ENCODE measurements at regions of chr2 and their contacts with region 1.

Region 1: GRCh38 chr2:10408649-10409579 is 39.2 kb downstream of the ODC1 start:
- DNase-seq: peak; percentile 70 to 80 (median 80)
- H3K4me3 ChIP-seq: peak overlapping the region in 1 of 3 experiments; percentile 48
- H3K4me3 Mint-ChIP-seq: peak overlapping the region; percentile 58 to 85
- H3K27ac ChIP-seq: peak overlapping the region; percentile 87 to 91
- H3K27ac Mint-ChIP-seq: peak overlapping the region; percentile 92 to 99 (median 97)
- H3K4me1 ChIP-seq: peaks cover 64 to 70% of the 10 kb centered on the region in 2 donors
- H3K4me1 Mint-ChIP-seq: peaks cover 75% of the 10 kb centered on the region
- H3K27me3 ChIP-seq: no peaks in the 10 kb centered on the region
- H3K27me3 Mint-ChIP-seq: peaks cover 0 to 7% (median 1%) of the 10 kb centered on the region in 3 donors
- CTCF ChIP-seq: peak; percentile 99

Region 2: DNA sequence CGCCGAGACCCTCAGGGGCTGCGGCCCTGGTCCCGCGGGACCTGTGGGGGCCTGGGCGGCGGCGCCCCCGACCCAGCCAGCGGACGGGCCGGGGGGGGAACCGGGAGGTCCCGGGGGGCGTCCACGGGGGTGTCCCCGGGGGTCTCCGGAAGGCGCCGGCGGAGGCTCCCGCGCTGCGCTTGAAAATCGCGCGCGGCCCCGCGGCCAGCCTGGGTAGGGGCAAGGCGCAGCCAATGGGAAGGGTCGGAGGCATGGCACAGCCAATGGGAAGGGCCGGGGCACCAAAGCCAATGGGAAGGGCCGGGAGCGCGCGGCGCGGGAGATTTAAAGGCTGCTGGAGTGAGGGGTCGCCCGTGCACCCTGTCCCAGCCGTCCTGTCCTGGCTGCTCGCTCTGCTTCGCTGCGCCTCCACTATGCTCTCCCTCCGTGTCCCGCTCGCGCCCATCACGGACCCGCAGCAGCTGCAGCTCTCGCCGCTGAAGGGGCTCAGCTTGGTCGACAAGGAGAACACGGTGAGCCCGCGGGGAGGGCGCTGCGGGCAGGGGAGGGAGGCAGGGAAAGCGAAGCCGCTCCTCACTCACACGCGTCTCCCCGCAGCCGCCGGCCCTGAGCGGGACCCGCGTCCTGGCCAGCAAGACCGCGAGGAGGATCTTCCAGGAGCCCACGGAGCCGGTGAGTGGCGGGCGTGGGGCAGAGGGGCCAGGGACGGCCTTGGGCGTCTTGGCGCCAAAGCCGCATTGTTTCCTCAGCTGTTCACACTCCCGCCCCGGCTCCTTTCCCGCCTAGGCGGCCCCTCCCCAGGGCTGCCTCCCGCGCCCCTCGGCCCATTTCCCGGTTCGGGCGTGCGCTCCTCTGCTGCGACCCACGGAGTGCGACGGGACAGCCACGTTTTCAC is 286.3 kb before region 1 on chr2 and contains the start of gene RRM2:
- intact Hi-C with region 1: loop called in 1 of 2 experiments (anchors 5 kb)
- DNase-seq: peak; percentile 76 to 86 (median 84)
- H3K4me3 ChIP-seq: peak within 1 kb of the TSS; percentile 64 to 85 (median 68)
- H3K4me3 Mint-ChIP-seq: peak within 1 kb of the TSS; percentile 89 to 95
- H3K27ac ChIP-seq: peak within 1 kb of the TSS in 1 of 2 donors; percentile 66
- H3K27ac Mint-ChIP-seq: peak within 1 kb of the TSS; percentile 76 to 99 (median 92)
- H3K4me1 ChIP-seq: peaks cover 51 to 77% of the 10 kb centered on the region in 2 donors
- H3K4me1 Mint-ChIP-seq: peaks cover 58% of the 10 kb centered on the region
- H3K27me3 ChIP-seq: no peaks in the 10 kb centered on the region
- H3K27me3 Mint-ChIP-seq: no peaks in the 10 kb centered on the region
- CTCF ChIP-seq: no peak
- polyA plus RNA-seq, gene RRM2: 1.5 TPM in 1 of 3 donors, not detected in the others

Region 3: GRCh38 chr2:10267551-10268465 is 141.1 kb before region 1 on chr2:
- intact Hi-C with region 1: loop called in 1 of 2 experiments (anchors 2 kb)
- DNase-seq: no peak
- H3K4me3 ChIP-seq: no peak overlapping the region
- H3K4me3 Mint-ChIP-seq: no peak overlapping the region
- H3K27ac ChIP-seq: no peak overlapping the region
- H3K27ac Mint-ChIP-seq: no peak overlapping the region
- H3K4me1 ChIP-seq: peaks cover 10 to 14% of the 10 kb centered on the region in 2 donors
- H3K4me1 Mint-ChIP-seq: peaks cover 10% of the 10 kb centered on the region
- H3K27me3 ChIP-seq: no peaks in the 10 kb centered on the region
- H3K27me3 Mint-ChIP-seq: peaks cover 0 to 11% (median 9%) of the 10 kb centered on the region in 3 donors
- CTCF ChIP-seq: no peak

Region 4: GRCh38 chr2:10285556-10286198 is 123.2 kb before region 1 on chr2:
- intact Hi-C with region 1: loop called in 1 of 2 experiments (anchors 5 kb)
- DNase-seq: peak; percentile 91 to 94 (median 93)
- H3K4me3 ChIP-seq: peak overlapping the region in 1 of 3 experiments; percentile 30
- H3K4me3 Mint-ChIP-seq: peak overlapping the region; percentile 56 to 66
- H3K27ac ChIP-seq: peak overlapping the region; percentile 91 to 95
- H3K27ac Mint-ChIP-seq: peak overlapping the region; percentile 93 to 98 (median 96)
- H3K4me1 ChIP-seq: peaks cover 66 to 79% of the 10 kb centered on the region in 2 donors
- H3K4me1 Mint-ChIP-seq: peaks cover 76% of the 10 kb centered on the region
- H3K27me3 ChIP-seq: no peaks in the 10 kb centered on the region
- H3K27me3 Mint-ChIP-seq: peaks cover 1 to 2% (median 2%) of the 10 kb centered on the region in 3 donors
- CTCF ChIP-seq: no peak

Region 5: GRCh38 chr2:10302479-10303180 is 106.3 kb before region 1 on chr2 and contains the start of gene HPCAL1:
- intact Hi-C with region 1: loop called (anchors 2 to 5 kb)
- DNase-seq: peak; percentile 90 to 91 (median 90)
- H3K4me3 ChIP-seq: peak within 1 kb of the TSS; percentile 79 to 93 (median 84)
- H3K4me3 Mint-ChIP-seq: peak within 1 kb of the TSS; percentile 98 to 100
- H3K27ac ChIP-seq: peak within 1 kb of the TSS; percentile 87 to 94
- H3K27ac Mint-ChIP-seq: peak within 1 kb of the TSS; percentile 83 to 95 (median 92)
- H3K4me1 ChIP-seq: peaks cover 64 to 92% of the 10 kb centered on the region in 2 donors
- H3K4me1 Mint-ChIP-seq: peaks cover 76% of the 10 kb centered on the region
- H3K27me3 ChIP-seq: no peaks in the 10 kb centered on the region
- H3K27me3 Mint-ChIP-seq: peaks cover 0 to 5% (median 4%) of the 10 kb centered on the region in 3 donors
- CTCF ChIP-seq: peak; percentile 76
- polyA plus RNA-seq, gene HPCAL1: 82.1 to 99.5 (median 98.0) TPM

Region 6: DNA sequence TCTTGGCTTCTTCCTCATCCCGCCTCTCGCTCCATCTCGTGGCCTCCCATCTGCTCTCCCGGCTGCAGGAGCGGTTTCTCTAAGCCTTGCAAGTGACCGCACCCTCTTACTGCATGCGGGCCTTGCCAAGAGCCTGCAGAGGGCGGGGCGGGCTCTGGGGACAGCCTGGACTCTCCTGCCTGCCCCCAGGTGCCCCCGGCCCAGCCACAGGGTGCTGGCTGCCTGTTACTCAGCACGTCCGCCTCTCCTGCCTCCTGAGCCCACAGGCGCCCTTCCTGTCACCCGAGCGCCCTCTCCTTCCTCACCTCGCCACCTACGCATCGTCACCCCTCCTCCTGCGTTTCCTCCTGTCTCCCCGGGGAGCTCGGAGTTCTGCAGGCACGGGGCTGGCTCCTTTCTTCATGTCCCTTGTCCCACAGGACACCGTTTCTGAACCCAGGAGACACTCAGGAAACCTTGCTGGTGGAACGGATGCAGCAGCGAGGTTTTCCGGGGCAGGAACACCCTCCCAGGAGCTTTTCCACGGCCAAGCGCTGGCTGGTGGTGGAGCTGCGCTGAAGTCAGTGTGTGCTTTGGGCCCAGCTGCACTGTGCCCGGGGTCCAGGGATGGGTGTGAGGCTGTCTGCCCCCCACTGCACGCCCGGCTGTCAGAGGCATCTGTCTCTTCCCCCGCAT is 77.8 kb before region 1 on chr2:
- intact Hi-C with region 1: loop called (anchors 1 to 2 kb)
- DNase-seq: peak; percentile 50 to 61 (median 55)
- H3K4me3 ChIP-seq: peak overlapping the region in 2 of 3 experiments; percentile 28 to 63
- H3K4me3 Mint-ChIP-seq: peak overlapping the region; percentile 66 to 86
- H3K27ac ChIP-seq: peak overlapping the region; percentile 91 to 93
- H3K27ac Mint-ChIP-seq: peak overlapping the region; percentile 97 to 99 (median 98)
- H3K4me1 ChIP-seq: peaks cover 46 to 66% of the 10 kb centered on the region in 2 donors
- H3K4me1 Mint-ChIP-seq: peaks cover 70% of the 10 kb centered on the region
- H3K27me3 ChIP-seq: no peaks in the 10 kb centered on the region
- H3K27me3 Mint-ChIP-seq: peaks cover 0 to 4% (median 1%) of the 10 kb centered on the region in 3 donors
- CTCF ChIP-seq: peak; percentile 22

Region 7: GRCh38 chr2:10382354-10383061 is 26.4 kb before region 1 on chr2:
- intact Hi-C with region 1: loop called in 1 of 2 experiments (anchors 2 kb)
- DNase-seq: peak; percentile 66 to 77 (median 71)
- H3K4me3 ChIP-seq: peak overlapping the region in 2 of 3 experiments; percentile 9 to 59
- H3K4me3 Mint-ChIP-seq: peak overlapping the region; percentile 65 to 85
- H3K27ac ChIP-seq: peak overlapping the region; percentile 34 to 59
- H3K27ac Mint-ChIP-seq: peak overlapping the region; percentile 58 to 90 (median 82)
- H3K4me1 ChIP-seq: peaks cover 89 to 97% of the 10 kb centered on the region in 2 donors
- H3K4me1 Mint-ChIP-seq: peaks cover 94% of the 10 kb centered on the region
- H3K27me3 ChIP-seq: no peaks in the 10 kb centered on the region
- H3K27me3 Mint-ChIP-seq: peaks cover 0 to 2% (median 2%) of the 10 kb centered on the region in 3 donors
- CTCF ChIP-seq: no peak